ENCODE measurements at regions of chr4 and their contacts with region 1.

Region 1: DNA sequence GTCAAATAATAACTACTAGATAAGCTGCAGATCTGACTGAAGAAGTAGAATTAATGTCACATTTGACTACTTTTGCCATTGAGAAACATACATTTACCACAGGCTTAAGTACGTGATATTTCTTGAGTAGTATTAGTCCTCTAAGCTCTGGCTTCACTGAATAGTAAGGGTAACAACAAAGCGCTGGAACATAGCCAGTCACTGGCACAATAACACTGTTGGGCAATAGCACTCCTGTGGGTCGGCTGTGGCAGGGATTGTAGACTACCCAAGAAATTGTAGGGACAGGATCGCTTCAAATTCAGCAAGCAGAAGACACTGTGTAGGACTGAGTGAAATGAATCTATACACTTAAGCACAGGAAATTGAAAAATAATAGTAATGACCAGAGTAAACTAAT is 27.1 kb upstream of the IL15 start:
- DNase-seq: no peak
- H3K4me3 ChIP-seq: no peak overlapping the region
- H3K27ac ChIP-seq: no peak overlapping the region
- H3K4me1 ChIP-seq: no peaks in the 10 kb centered on the region
- H3K27me3 ChIP-seq: no peaks in the 10 kb centered on the region
- CTCF ChIP-seq: no peak
- EP300 ChIP-seq: no peak
- POLR2A ChIP-seq: no peak

Region 2: GRCh38 chr4:140260227-140260626 is 1349.0 kb before region 1 on chr4:
- in situ Hi-C with region 1: no loop called
- intact Hi-C with region 1: loop called (anchors 10 kb)
- DNase-seq: no peak
- H3K4me3 ChIP-seq: no peak overlapping the region
- H3K27ac ChIP-seq: no peak overlapping the region
- H3K4me1 ChIP-seq: peaks cover 0 to 9% (median 0%) of the 10 kb centered on the region in 4 donors
- H3K27me3 ChIP-seq: no peaks in the 10 kb centered on the region
- CTCF ChIP-seq: no peak
- EP300 ChIP-seq: no peak
- POLR2A ChIP-seq: no peak

Measured in transverse colon (tissue), 4 donors.